ENCODE measurements at regions of chr1 and their contacts with region 1.

Region 1: DNA sequence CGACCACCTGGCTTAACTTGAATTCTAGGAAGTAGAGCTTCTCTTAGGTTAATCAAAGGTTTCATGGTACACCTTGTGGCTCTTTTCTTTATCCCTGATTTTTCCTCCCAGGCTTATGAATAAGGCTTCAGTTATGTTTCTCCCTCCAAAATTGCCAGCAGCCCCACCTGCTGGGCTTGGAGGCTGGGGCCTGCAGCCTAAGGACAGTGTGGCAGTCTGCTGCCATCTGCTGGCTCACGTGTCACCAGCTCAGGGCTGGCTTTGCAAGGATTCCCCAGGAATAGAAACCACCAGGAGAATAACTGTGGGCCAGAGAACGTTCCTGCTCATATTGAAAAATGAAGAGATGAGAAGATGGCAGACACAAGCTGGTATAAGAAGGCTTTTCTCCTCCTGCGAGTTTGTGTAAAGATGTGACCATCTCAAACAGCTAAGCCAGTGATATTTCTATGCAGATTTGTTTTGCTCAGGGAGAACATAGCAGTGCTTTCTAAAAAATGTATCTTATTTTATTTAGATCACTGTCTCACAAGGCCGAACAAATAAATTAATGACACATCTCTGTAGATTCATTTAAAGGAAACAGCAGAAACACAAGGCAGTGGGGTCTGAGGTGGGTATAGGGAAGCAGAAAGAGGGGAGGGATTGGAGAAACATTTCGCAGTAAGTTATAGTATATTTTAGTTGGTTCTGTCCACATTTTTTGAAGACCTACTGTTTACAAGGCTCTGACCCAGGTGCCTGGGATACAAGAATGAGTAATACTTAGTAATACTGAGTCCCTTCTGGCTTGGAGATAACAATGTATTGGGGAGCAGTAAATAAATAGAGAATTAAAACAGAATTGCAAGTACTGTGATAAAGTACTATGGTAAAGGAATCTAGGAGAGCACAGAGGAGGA is 291.1 kb upstream of the SGIP1 start:
- DNase-seq: no peak
- H3K4me3 ChIP-seq: no peak overlapping the region
- H3K27me3 ChIP-seq: no peaks in the 10 kb centered on the region
- CTCF ChIP-seq: peak; percentile 99

Region 2: DNA sequence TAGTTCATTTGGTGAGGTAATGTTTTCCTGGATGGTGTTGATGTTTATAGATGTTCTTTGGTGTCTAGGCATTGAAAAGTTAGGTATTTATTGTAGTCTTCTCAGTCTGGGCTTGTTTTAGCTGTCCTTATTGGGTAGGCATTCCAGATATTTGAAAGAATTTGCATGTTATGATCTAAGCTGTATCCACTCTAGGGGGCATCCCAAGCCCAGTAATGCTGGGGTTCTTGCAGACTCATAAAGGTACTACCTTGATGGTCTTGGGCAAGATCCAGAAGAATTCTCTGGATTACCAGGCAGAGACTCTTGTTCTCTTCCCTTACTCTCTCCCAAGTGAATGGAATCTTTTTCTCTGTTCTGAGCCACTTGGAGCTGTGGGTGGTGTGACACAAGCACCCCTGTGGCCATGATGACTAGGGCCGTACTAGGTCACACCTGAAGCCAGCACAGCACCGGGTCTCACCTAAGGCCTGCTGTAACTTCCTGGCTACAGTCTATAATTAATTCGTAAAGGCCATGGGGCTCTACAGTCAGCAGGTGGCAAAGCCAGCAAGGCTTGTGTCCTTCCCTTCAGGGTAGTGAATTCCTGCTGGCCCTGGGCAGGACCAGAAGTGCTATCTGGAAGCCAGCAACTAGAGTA is 525.0 kb before region 1 on chr1:
- CTCF ChIA-PET with region 1: interaction called, 17 read pairs
- POLR2A ChIA-PET with region 1: no interaction called
- DNase-seq: peak; percentile 12
- H3K4me3 ChIP-seq: no peak overlapping the region
- H3K27me3 ChIP-seq: no peaks in the 10 kb centered on the region
- CTCF ChIP-seq: peak; percentile 35; the same call in 1 of the 2 replicates

Region 3: GRCh38 chr1:65958561-65959350 is 284.1 kb before region 1 on chr1:
- CTCF ChIA-PET with region 1: interaction called, 140 read pairs
- POLR2A ChIA-PET with region 1: no interaction called
- DNase-seq: no peak
- H3K4me3 ChIP-seq: no peak overlapping the region
- H3K27me3 ChIP-seq: no peaks in the 10 kb centered on the region
- CTCF ChIP-seq: peak; percentile 51

Region 4: DNA sequence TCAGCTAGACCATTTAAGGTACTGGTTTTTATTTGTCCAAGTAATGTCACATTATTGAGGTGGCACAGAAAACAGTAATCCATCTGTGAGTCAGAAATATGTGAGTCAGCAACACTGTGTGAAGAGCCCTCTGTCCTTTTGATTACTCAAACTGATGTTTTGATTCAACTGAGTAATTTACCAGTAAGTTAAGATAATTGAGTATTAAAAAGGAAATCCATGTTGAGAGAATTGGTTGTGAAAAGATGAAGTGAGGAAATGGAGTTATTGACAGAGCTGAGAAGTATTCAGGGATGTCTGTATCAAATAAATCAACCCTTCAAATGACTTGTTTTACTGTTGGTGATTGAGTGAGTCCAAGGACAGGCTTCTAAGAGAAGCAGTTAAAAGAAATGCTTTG is 11.7 kb before region 1 on chr1:
- CTCF ChIA-PET with region 1: interaction called, 15 read pairs
- POLR2A ChIA-PET with region 1: no interaction called
- DNase-seq: peak; percentile 31
- H3K4me3 ChIP-seq: no peak overlapping the region
- H3K27me3 ChIP-seq: no peaks in the 10 kb centered on the region
- CTCF ChIP-seq: no peak

Region 5: DNA sequence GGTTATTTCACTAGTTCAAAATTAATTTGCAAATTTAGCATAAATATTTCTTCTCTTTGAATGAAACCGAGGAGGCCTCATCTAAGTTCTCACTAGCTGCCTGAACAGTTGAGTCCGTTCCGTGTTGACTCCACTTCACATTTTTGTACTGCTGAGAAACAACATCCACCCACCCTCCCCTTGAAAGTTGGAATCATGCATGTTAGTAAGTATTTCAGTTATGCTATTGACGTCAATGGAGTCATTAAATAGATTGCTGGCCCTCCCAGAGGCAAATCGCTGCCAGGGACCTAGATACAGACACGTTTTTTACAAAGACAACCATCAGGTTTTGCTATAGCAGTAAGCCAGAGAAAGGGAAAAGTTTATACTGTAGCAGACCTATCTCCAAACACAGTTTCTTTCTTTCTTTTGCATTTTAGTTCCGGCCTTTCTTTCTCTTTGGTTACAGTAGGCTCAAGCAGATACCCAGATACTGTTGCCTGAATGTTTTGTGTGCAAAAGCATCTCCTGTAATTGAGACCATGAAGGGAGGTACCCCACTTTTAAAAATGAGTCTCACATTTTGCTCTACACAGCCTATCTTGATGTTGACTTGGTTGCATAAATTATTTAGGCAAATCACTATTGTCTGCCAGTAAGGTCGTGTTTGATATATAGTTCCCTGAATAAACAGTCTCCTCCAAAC is 28.5 kb after region 1 on chr1:
- CTCF ChIA-PET with region 1: no interaction called
- POLR2A ChIA-PET with region 1: no interaction called
- DNase-seq: peak; percentile 98
- H3K4me3 ChIP-seq: no peak overlapping the region
- H3K27me3 ChIP-seq: no peaks in the 10 kb centered on the region
- CTCF ChIP-seq: no peak

Region 6: DNA sequence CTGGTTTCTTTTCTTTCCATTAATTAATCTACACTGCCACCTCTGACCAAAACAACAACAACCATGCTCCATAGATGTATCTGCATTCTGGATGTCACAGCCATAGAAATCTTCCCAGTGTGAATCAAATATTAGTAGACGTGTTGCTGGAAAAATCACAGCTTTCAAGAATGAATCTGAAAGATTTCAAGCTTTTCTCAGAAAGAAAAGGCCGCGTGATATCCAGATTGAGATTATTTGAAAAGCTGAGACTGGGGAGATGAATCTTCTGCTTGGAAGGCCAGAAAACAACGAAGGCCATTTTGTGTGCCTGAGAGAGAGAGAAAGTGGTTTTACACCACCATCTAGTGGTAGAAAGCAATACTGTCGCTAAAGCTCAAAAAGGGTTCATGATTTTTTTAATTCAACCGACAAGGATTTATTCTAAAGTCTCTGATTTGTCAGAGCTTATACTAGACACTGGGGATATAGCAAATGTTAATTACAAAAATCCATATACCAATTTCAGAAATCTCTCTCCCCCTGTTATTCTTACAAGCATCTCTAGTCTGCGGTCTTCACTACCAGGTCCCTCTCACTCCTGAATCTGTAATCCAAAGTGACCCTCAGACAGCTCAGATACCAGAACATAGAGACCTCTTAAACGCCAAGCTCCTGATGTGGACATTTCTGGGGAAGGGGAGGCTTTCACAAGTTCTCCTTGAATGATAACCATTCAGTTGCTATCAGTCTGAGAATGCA is 203.5 kb after region 1 on chr1:
- CTCF ChIA-PET with region 1: interaction called, 293 read pairs
- POLR2A ChIA-PET with region 1: no interaction called
- DNase-seq: no peak
- H3K4me3 ChIP-seq: no peak overlapping the region
- H3K27me3 ChIP-seq: no peaks in the 10 kb centered on the region
- CTCF ChIP-seq: peak; percentile 74